AG04450 (cell line): ENCODE measurements at regions of chr11 and their contacts with region 1.

Region 1: GRCh38 chr11:10540923-10541560 is at the start of gene RNF141:
- DNase-seq: peak; percentile 55
- H3K4me3 ChIP-seq: peak within 1 kb of the TSS; percentile 86
- H3K27ac ChIP-seq: peak within 1 kb of the TSS; percentile 84
- H3K27me3 ChIP-seq: no peaks in the 10 kb centered on the region
- CTCF ChIP-seq: peak; percentile 82
- polyA plus RNA-seq, gene RNF141: 23.7 and 34.8 TPM in 2 replicates

Region 2: DNA sequence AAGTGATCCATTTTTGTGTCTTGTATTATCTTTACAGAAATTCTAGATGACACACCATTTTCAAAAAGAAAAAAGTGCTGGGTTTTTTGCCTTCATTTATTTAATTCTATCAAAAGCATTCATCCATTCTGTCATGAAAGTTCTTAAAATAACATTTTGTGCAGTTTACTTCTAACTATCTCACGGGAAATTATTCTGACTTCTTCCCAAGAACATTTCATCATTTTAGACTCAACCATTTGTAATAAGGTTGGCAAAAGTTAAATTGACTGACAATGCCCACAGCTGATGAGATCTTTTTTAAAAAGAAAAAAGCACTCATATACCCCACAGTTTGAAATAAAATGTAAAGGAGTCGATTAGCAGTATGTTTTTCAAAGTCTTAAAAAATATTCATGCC is 315.5 kb before region 1 on chr11:
- CTCF ChIA-PET with region 1: no interaction called
- POLR2A ChIA-PET with region 1: no interaction called
- DNase-seq: no peak
- H3K4me3 ChIP-seq: no peak overlapping the region
- H3K27ac ChIP-seq: no peak overlapping the region
- H3K27me3 ChIP-seq: no peaks in the 10 kb centered on the region
- CTCF ChIP-seq: no peak

Region 3: DNA sequence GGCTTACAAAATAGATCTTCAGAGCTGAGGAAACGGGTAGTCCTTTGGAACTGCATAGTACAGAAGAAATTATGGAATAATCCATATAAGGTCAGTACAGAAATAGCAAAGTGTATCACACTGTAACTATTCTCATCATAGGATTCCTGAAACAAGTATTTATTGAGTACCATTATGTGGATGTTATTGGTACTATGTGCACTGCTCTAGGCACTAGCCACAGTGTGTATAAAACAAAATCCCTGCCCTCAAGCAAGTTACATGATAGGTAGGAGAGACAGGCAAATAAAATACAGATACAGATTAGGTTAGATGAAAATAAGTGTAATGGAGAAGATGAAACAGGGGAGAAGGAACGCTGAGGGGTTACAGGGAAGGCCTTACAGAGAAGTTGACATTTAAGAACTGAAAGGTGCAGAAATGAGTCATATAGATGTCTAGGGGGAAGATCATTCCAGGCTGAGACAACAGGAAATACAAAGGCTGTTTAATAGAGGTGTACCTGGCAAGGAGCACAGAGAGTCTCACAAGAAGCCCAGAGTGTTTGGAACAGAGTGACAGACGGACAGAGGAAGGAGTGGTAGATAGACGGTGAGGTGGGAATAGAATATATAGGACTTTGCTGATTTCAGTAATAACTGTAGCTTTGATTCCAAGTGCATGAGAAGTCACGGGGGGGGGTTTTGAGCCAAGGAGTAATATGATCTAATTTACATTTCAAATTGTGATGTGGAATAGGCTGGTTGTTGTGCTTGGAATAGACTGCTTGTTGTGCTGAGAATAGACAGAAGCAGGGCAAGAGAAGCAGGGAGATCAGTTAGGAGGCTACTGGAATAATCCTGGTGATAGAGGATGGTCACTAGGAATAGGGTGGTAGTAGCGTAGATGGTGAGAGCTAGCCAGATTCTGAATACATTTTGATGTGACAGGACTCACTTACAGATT is 13.8 kb before region 1 on chr11:
- CTCF ChIA-PET with region 1: interaction called, 44 read pairs
- POLR2A ChIA-PET with region 1: interaction called, 10 read pairs
- DNase-seq: no peak
- H3K4me3 ChIP-seq: no peak overlapping the region; the same call in 1 of the 2 replicates
- H3K27ac ChIP-seq: peak overlapping the region; percentile 66
- H3K27me3 ChIP-seq: no peaks in the 10 kb centered on the region
- CTCF ChIP-seq: no peak

Region 4: GRCh38 chr11:10556590-10556989 is 15.5 kb after region 1 on chr11:
- CTCF ChIA-PET with region 1: interaction called, 25 read pairs
- POLR2A ChIA-PET with region 1: no interaction called
- DNase-seq: no peak
- H3K4me3 ChIP-seq: no peak overlapping the region
- H3K27ac ChIP-seq: no peak overlapping the region
- H3K27me3 ChIP-seq: peaks cover 3% of the 10 kb centered on the region
- CTCF ChIP-seq: no peak

Region 5: DNA sequence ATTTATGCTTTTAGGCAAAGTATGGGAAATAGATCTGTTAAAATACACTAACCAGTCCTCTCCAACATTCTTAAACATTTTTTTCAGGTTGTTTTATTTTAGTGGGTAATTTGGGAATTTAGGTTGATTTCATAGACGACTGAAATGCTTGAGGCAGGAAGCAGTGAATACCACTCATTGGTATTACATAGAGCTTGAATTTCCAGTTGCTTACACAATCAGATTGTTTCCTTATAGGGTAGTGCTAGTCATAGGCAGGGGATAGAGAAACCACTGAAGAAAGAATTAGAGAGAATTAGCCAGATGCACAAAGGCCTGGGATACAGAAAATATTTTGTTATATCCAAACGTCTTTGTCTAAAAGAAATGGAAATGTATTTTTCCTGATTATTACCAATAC is 51.3 kb after region 1 on chr11:
- CTCF ChIA-PET with region 1: interaction called, 21 read pairs
- POLR2A ChIA-PET with region 1: no interaction called
- DNase-seq: peak; percentile 84
- H3K4me3 ChIP-seq: no peak overlapping the region
- H3K27ac ChIP-seq: peak overlapping the region; percentile 95
- H3K27me3 ChIP-seq: no peaks in the 10 kb centered on the region
- CTCF ChIP-seq: no peak

Region 6: DNA sequence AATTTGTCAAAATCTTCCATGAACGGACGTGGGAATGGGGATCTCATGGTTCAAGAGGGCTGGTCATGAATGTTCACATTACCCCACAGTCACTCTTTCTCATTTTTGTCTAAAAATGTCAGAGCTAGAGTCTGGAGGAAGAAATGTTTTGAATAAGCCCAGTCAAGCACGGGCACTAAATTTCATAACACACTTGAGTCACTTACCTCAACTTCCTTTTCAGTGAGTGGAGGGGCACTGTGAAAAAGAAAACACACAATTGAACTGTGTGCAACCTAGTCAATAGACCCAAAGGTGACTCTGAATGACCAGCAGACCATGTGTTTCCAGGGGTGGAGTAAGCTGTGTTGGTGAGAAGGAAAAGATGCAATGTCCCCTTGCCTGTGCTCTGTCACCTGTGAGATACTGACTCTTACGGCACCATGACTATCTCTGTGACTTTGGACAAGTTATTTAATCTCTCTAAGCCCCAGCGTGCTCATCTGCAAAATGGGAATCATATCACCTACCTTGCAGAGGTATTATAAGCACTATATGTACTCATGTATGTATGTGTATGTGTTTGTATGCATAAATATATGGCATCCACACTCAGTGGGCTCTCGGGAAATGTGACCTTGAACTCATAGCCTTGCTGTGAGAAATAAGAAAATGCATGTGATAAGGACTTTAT is 65.6 kb after region 1 on chr11:
- CTCF ChIA-PET with region 1: interaction called, 15 read pairs
- POLR2A ChIA-PET with region 1: interaction called, 4 read pairs
- DNase-seq: peak; percentile 73
- H3K4me3 ChIP-seq: no peak overlapping the region
- H3K27ac ChIP-seq: peak overlapping the region; percentile 97
- H3K27me3 ChIP-seq: no peaks in the 10 kb centered on the region
- CTCF ChIP-seq: no peak